Dorsolateral prefrontal cortex (tissue), 120 donors: ENCODE measurements at regions of chr13 and their contacts with region 1.

Region 1: GRCh38 chr13:21998279-21998990 is 327.6 kb downstream of the FGF9 start:
- DNase-seq: no peak
- H3K4me3 ChIP-seq: no peak overlapping the region
- H3K27ac ChIP-seq: no peak overlapping the region
- H3K27me3 ChIP-seq: peaks cover 0 to 29% (median 0%) of the 10 kb centered on the region in 45 donors
- CTCF ChIP-seq: no peak

Region 2: GRCh38 chr13:21938168-21938567 is 60.3 kb before region 1 on chr13:
- intact Hi-C with region 1: no loop called
- DNase-seq: no peak
- H3K4me3 ChIP-seq: no peak overlapping the region
- H3K27ac ChIP-seq: no peak overlapping the region
- H3K27me3 ChIP-seq: peaks cover 0 to 12% (median 0%) of the 10 kb centered on the region in 45 donors
- CTCF ChIP-seq: no peak

Region 3: DNA sequence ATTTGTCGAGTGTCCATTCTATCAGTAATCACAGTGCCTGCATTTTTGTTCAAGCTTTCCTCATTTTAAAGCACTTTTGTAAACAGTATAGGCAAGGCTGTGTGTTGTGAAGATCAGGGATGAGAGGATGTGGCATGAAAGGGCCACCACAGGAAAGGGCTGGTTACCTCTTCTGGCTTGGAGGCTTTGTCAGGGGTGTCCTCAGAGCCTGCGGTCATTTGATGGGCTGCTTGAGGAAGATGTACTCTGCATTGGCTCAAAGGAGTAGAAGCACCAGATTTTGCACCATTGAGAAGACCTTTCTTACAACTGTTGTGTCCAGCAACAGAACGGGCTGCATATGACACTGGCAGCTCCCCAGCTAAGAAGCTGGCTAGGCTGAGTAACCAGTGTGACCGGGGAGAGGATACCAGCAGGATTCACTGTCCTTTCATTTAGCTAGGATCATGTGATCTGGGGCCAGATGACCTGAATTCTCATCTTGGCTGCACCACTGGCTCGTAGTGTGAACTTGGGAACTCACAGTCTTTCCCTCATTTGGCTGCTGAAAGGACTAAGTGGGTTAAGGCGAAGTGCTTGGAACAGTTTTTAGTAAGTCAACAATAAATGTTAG is 52.6 kb after region 1 on chr13:
- intact Hi-C with region 1: loop called in 1 of 2 experiments (anchors 10 kb)
- DNase-seq: no peak
- H3K4me3 ChIP-seq: no peak overlapping the region
- H3K27ac ChIP-seq: no peak overlapping the region
- H3K27me3 ChIP-seq: peaks cover 0 to 9% (median 0%) of the 10 kb centered on the region in 45 donors
- CTCF ChIP-seq: no peak